Aorta (tissue), 5 donors: ENCODE measurements at regions of chr16 and their contacts with region 1.

Region 1: DNA sequence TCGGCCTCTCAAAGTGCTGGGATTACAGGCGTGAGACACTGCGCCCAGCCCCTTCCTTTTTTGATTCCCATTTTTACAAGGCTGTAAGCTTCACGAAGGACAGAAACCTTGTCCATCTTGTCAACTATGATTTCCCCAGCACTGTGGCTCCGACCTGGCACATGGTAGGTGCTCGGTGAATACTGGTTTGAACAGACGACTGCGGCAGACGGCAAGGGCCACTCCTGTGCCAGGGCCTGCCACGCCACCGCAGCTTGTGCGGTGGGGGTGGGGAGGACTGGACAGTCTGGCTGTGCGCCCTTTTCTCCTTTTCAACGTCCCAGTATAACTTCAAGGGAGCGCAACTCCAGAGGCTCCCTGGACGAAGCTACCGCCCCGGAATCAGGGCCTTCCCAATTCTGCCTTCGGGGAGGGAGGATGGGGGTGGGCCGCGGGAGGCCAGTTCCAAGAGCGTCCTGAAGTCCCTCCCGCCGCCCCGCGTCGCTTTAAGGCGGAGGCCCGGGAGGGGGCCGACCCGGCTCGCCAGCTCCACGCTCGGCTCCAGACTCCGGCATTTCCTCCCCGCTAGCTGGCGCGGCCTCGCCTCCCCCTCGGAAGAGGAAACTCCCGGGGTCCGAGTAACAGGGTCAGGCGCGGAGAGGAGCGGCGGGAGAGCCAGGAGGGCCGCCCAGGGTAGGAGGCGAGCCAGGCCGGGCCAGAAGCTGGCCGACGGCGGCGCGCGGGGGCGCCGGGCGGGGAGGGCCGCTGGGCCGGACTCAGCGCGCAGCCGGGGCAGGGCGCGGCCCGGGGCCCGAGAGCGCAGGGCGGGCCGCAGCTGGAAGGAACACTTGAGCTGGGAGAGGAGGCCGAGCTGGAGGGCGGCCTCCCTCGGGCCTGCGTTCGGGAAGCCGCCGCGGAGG is at the start of gene ITPRIPL2:
- DNase-seq: peak; percentile 96
- ATAC-seq: peak; percentile 91
- H3K4me3 ChIP-seq: peak within 1 kb of the TSS; percentile 76 to 86
- H3K27ac ChIP-seq: peak within 1 kb of the TSS; percentile 73 to 88
- H3K4me1 ChIP-seq: no peaks in the 10 kb centered on the region
- H3K27me3 ChIP-seq: no peaks in the 10 kb centered on the region
- total RNA-seq, gene ITPRIPL2: 71.5 to 88.9 TPM

Region 2: DNA sequence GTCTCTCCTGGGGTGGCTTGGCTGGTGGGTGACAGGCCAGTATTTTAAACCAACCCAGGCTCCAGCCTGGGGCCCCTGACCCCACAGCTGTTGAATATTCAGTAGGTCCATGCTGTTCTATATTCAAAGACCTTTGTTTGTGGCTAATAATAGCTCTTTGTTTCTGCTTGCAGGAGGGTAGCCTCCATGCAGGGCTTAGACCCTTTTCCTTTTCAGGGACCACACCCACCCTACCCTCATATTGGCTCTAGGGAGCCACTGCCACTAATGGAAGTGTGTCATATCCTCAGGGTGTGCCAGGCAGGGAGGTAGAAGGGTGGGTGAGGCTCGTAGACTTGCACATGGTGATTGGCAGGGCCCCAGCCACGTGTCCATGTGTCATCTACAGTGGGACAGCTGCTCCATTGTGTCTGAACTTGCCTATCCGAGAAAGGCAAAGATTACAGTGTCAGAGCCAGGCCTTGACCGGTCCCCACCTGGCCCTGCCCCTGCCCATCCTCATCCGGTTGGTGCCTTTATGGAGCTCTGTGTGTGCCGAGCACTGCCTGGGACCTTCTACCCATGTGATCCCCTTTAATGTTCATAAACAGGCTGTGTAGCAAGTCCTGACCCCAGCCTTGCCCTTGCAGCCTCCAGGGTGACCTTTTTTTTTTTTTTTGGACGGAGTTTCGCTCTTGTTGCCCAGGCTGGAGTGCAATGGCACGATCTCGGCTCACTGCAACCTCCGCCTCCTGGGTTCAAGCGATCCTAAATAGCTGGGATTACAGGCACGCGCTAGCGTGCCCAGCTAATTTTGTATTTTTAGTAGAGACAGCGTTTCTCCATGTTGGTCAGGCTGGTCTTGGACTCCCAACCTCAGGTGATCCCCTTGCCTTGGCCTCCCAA is 107.9 kb before region 1 on chr16:
- intact Hi-C with region 1: no loop called
- DNase-seq: no peak
- ATAC-seq: peak; percentile 37
- H3K4me3 ChIP-seq: no peak overlapping the region
- H3K27ac ChIP-seq: no peak overlapping the region
- H3K4me1 ChIP-seq: peaks cover 0 to 4% of the 10 kb centered on the region in 2 donors
- H3K27me3 ChIP-seq: no peaks in the 10 kb centered on the region

Region 3: GRCh38 chr16:19044769-19045168 is 68.9 kb before region 1 on chr16:
- intact Hi-C with region 1: no loop called
- DNase-seq: no peak
- ATAC-seq: no peak
- H3K4me3 ChIP-seq: no peak overlapping the region
- H3K27ac ChIP-seq: no peak overlapping the region
- H3K4me1 ChIP-seq: no peaks in the 10 kb centered on the region
- H3K27me3 ChIP-seq: no peaks in the 10 kb centered on the region

Region 4: GRCh38 chr16:19153876-19154275 is 40.2 kb after region 1 on chr16:
- intact Hi-C with region 1: no loop called
- DNase-seq: no peak
- ATAC-seq: no peak
- H3K4me3 ChIP-seq: no peak overlapping the region
- H3K27ac ChIP-seq: no peak overlapping the region
- H3K4me1 ChIP-seq: no peaks in the 10 kb centered on the region
- H3K27me3 ChIP-seq: no peaks in the 10 kb centered on the region

Region 5: DNA sequence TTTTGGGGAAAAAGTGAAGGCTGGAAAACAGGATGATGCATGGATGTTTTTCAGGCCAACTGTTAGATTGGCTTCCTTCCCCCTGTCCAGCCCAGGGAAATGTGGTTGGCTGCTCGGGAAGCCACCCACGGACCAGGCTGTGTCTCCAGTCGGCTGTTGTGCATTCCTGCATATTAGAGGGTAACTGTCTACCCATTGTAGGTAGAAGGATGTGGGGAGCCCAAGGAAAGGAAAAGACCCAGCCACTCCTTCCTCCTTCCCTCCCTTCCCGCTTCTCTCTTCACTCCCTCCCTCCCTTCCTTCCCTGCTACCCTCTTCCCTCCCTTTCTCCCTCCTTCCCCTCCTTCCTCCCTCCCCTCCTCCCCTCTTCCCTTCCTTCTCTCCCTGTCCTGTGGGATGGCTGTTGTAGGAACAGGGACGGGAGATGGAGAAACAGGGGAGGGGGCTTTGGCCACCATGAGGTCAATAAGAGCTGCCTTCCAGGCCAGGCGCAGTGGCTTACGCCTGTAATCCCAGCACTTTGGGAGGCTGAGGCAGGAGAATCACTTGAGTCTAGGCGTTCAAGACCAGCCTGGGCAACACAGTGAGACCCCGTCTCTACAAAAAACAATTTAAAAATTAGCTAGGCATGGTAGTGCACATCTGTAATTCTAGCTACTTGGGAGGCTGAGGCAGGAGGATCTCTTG is 71.3 kb after region 1 on chr16:
- intact Hi-C with region 1: loop called in 1 of 2 experiments (anchors 5 kb)
- DNase-seq: no peak
- ATAC-seq: no peak
- H3K4me3 ChIP-seq: no peak overlapping the region
- H3K27ac ChIP-seq: no peak overlapping the region
- H3K4me1 ChIP-seq: no peaks in the 10 kb centered on the region
- H3K27me3 ChIP-seq: no peaks in the 10 kb centered on the region